ENCODE measurements at regions of chr12 and their contacts with region 1.

Region 1: GRCh38 chr12:12442548-12443071 is 85.7 kb downstream of the BORCS5 start:
- DNase-seq: no peak
- ATAC-seq: peak; percentile 43 to 71 (median 60)
- H3K4me3 ChIP-seq: no peak overlapping the region
- H3K27ac ChIP-seq: peak overlapping the region; percentile 36 to 80 (median 70)
- H3K4me1 ChIP-seq: peaks cover 0 to 66% (median 31%) of the 10 kb centered on the region in 12 donors
- H3K27me3 ChIP-seq: no peaks in the 10 kb centered on the region
- CTCF ChIP-seq: no peak
- POLR2A ChIP-seq: no peak

Region 2: DNA sequence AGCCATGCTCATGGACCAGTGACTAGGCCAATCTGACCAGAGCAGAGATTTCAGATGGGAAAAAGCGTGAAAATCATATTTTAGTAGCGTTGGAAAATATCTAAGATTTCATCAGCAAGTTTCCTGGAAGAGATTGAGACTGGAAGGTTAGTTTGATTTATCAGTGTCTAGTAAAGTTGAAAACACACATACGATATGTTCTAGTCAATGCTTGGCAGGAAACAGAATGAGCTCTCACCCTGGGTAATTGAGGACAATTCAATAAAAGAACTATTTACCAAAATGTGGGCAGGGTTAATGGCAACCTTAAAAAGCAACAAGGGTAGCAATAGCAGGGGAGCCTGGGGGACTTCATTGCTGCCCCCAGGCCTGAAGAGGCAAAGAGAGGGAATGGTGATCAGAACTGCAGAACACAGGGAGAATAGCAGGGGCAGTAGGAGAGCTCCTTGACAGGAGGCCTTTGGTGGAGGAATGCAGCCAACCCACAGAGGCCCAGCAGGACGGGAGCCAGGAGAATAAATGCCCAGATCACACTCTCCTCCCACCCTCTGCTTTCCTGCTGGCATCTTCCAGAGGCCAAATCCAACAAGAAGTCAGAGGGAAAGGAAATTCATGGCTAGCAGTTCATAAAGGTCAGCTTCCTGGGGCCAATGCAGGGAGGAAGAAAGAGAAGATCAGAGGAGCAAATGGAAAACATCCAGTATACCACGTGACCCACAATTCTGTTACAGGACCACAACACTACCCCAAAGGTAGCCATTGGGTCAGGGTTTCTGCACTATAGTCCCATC is 148.2 kb before region 1 on chr12:
- intact Hi-C with region 1: no loop called
- DNase-seq: no peak
- ATAC-seq: peak in 2 of 4 donors; percentile 34 to 48
- H3K4me3 ChIP-seq: no peak overlapping the region
- H3K27ac ChIP-seq: no peak overlapping the region
- H3K4me1 ChIP-seq: peaks cover 0 to 6% (median 0%) of the 10 kb centered on the region in 12 donors
- H3K27me3 ChIP-seq: no peaks in the 10 kb centered on the region
- CTCF ChIP-seq: no peak
- POLR2A ChIP-seq: no peak

Region 3: GRCh38 chr12:12398026-12398859 is 44.4 kb before region 1 on chr12:
- intact Hi-C with region 1: loop called in 1 of 10 experiments (anchors 5 kb)
- DNase-seq: peak in 4 of 5 donors; percentile 47 to 73 (median 63)
- ATAC-seq: peak; percentile 82 to 96 (median 94)
- H3K4me3 ChIP-seq: no peak overlapping the region
- H3K27ac ChIP-seq: peak overlapping the region in 10 of 12 donors; percentile 44 to 72 (median 56)
- H3K4me1 ChIP-seq: peaks cover 0 to 33% (median 16%) of the 10 kb centered on the region in 12 donors
- H3K27me3 ChIP-seq: no peaks in the 10 kb centered on the region
- CTCF ChIP-seq: peak in 4 of 12 donors; percentile 11 to 29 (median 28)
- POLR2A ChIP-seq: no peak